Activated CD4-positive, alpha-beta memory T cell treated with anti-CD3 and anti-CD28 coated beads, Interleukin-2, amount 10 ng/mL, durations not matched to agents 7 days and 5 days (primary cell): ENCODE measurements at regions of chr1 and their contacts with region 1.

Region 1: GRCh38 chr1:65459397-65459768 is 38.9 kb downstream of the LEPR start:
- DNase-seq: no peak
- H3K4me3 Mint-ChIP-seq: no peak overlapping the region
- H3K27ac Mint-ChIP-seq: no peak overlapping the region
- H3K4me1 Mint-ChIP-seq: peaks cover 30% of the 10 kb centered on the region
- H3K27me3 Mint-ChIP-seq: no peaks in the 10 kb centered on the region

Region 2: GRCh38 chr1:65230731-65231481 is 228.5 kb before region 1 on chr1:
- CTCF ChIA-PET with region 1: interaction called, 40 read pairs
- POLR2A ChIA-PET with region 1: no interaction called
- DNase-seq: peak; percentile 24
- H3K4me3 Mint-ChIP-seq: no peak overlapping the region
- H3K27ac Mint-ChIP-seq: peak overlapping the region; percentile 71
- H3K4me1 Mint-ChIP-seq: peaks cover 29% of the 10 kb centered on the region
- H3K27me3 Mint-ChIP-seq: no peaks in the 10 kb centered on the region

Region 3: GRCh38 chr1:65235867-65236805 is 223.2 kb before region 1 on chr1:
- CTCF ChIA-PET with region 1: interaction called, 40 read pairs
- POLR2A ChIA-PET with region 1: no interaction called
- DNase-seq: no peak
- H3K4me3 Mint-ChIP-seq: no peak overlapping the region
- H3K27ac Mint-ChIP-seq: no peak overlapping the region
- H3K4me1 Mint-ChIP-seq: peaks cover 13% of the 10 kb centered on the region
- H3K27me3 Mint-ChIP-seq: peaks cover 11% of the 10 kb centered on the region

Region 4: GRCh38 chr1:65431111-65431705 is 28.2 kb before region 1 on chr1:
- CTCF ChIA-PET with region 1: interaction called, 27 read pairs
- POLR2A ChIA-PET with region 1: interaction called, 4 read pairs
- DNase-seq: no peak
- H3K4me3 Mint-ChIP-seq: no peak overlapping the region
- H3K27ac Mint-ChIP-seq: no peak overlapping the region
- H3K4me1 Mint-ChIP-seq: peaks cover 40% of the 10 kb centered on the region
- H3K27me3 Mint-ChIP-seq: no peaks in the 10 kb centered on the region

Region 5: GRCh38 chr1:65486613-65487012 is 27.2 kb after region 1 on chr1:
- CTCF ChIA-PET with region 1: no interaction called
- POLR2A ChIA-PET with region 1: no interaction called
- DNase-seq: no peak
- H3K4me3 Mint-ChIP-seq: no peak overlapping the region
- H3K27ac Mint-ChIP-seq: no peak overlapping the region
- H3K4me1 Mint-ChIP-seq: no peaks in the 10 kb centered on the region
- H3K27me3 Mint-ChIP-seq: no peaks in the 10 kb centered on the region